Endothelial cell of umbilical vein (primary cell): ENCODE measurements at regions of chr11 and their contacts with region 1.

Region 1: GRCh38 chr11:63974259-63975143 is at the start of gene COX8A:
- DNase-seq: peak; percentile 100
- H3K4me3 ChIP-seq: peak within 1 kb of the TSS; percentile 70 to 72 (median 71)
- H3K27ac ChIP-seq: peak within 1 kb of the TSS; percentile 72
- H3K4me1 ChIP-seq: peaks cover 13% of the 10 kb centered on the region
- H3K27me3 ChIP-seq: peaks cover 0 to 2% of the 10 kb centered on the region in 2 experiments
- CTCF ChIP-seq: peak in 1 of 2 donors; percentile 11
- POLR2A ChIP-seq: peak; percentile 86
- total RNA-seq, gene COX8A: 307 and 339 TPM in 2 replicates

Region 2: DNA sequence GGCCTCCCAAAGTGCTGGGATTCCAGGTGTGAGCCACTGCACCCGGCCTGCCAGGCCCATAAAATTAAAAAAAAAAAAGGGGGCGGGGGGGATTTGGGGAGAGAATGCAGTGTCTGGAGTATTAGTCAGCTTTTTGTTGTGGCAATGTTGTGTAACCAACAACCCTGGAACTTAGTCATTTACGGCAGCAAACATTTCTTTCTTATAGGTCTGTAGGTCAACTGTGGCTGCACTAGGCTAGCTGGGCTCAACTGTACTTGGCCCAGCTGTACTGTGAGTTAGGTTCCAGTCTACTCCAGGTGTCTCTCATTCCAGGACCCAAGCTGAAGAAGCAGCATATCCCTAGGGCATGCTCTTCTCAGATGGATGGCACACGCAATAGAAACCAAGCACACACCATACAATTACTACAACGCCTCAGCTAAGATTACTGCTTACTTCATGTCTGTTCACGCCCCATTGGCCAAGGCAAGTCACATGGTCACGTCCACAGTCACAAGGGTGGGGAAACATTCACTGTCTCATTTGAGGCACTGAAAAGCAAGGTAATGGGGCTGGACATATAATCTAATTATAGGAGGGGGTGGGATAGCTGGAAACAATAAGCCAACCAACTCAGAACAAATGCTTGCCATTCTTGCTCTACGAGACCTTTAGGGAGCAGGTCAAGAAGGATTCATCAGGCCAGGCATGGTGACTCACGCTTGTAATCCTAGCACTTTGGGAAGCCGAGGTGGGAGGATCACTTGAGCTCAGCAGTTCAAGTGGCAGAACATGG is 171.7 kb before region 1 on chr11:
- CTCF ChIA-PET with region 1: no interaction called
- POLR2A ChIA-PET with region 1: no interaction called
- dilution Hi-C with region 1: no loop called
- intact Hi-C with region 1: no loop called
- DNase-seq: no peak
- H3K4me3 ChIP-seq: no peak overlapping the region
- H3K27ac ChIP-seq: no peak overlapping the region
- H3K4me1 ChIP-seq: peaks cover 4% of the 10 kb centered on the region
- H3K27me3 ChIP-seq: no peaks in the 10 kb centered on the region
- CTCF ChIP-seq: no peak
- POLR2A ChIP-seq: no peak

Region 3: DNA sequence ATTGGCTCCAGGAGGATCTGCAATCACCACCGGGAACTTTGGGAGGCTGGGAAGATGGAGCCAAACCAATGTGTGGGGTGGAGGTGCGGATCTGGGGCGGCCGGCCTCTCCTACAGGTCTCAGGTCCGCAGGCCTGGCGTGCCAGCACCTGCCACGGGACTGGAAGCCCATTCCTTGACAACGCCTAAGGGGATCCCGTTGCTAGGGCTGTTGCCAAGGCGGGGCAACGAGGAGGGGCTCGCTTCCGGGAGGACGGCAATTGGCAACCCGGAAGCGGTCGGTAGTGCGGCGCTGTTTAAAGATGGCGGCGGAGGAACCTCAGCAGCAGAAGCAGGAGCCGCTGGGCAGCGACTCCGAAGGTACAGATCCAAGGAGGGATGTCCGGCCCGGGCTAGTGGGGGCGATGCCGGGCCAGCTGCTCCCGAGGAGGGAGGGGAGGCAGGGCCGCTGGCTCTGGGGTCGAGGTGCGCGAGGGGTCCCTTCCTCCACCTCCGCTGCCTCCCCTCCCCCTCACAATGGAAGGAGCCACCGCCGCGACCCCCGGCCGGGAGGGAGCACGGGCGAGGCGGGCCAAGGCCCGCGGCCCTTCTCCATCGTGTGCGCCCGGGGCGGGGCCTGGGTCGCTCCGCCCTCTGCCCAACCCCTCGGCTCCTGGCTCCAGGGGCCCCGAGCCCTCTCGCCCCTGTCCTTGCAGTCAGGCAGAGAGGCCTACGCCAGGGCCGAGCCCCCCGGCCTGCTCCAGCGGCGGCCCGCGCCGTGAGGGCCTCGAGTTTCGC is 11.8 kb after region 1 on chr11 and contains the start of gene OTUB1:
- CTCF ChIA-PET with region 1: no interaction called
- POLR2A ChIA-PET with region 1: no interaction called
- dilution Hi-C with region 1: no loop called
- intact Hi-C with region 1: loop called (anchors 1 kb)
- DNase-seq: peak; percentile 91
- H3K4me3 ChIP-seq: peak within 1 kb of the TSS; percentile 71 to 99 (median 72)
- H3K27ac ChIP-seq: peak within 1 kb of the TSS; percentile 48
- H3K4me1 ChIP-seq: peaks cover 7% of the 10 kb centered on the region
- H3K27me3 ChIP-seq: no peaks in the 10 kb centered on the region
- CTCF ChIP-seq: no peak
- POLR2A ChIP-seq: peak; percentile 91
- total RNA-seq, gene OTUB1: 80.0 and 81.9 TPM in 2 replicates